ENCODE measurements at regions of chr1 and their contacts with region 1.

Region 1: GRCh38 chr1:225652729-225653462 is at the start of gene ENAH:
- DNase-seq: peak; percentile 87
- ATAC-seq: peak; percentile 89
- total RNA-seq, gene ENAH: 80.0 TPM

Region 2: DNA sequence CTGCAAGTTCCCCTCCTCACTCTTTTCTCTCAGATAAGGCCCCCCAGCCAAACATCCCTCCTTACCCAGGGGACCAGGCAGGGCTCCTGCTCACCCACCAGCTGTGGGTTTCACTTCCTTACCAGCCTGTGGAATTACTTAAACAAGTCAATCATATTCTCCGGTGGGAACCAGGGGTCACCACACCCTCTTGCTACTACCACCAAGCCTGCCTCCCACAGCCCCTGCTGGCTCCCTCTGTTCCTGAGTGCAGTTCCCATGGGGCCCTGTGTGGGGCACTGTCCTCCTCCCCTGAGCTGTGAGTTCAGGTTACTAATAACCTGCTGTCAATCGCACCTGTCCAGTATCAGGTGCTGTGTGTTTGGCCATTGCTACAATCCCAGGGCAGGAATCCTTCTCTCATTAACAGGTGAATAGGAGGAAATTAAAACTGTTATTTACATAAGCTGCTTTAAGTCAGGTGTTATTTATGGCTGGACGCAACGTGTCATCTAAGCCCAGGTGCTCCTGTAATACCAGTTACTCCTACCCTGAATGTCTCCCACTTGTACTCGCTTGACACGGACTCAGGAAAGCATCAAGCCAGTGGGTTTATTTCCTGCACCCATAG is 172.0 kb before region 1 on chr1:
- intact Hi-C with region 1: loop called (anchors 5 kb)
- DNase-seq: no peak
- ATAC-seq: no peak

Region 3: GRCh38 chr1:225578251-225578950 is 74.5 kb before region 1 on chr1:
- intact Hi-C with region 1: loop called (anchors 5 kb)
- DNase-seq: no peak
- ATAC-seq: no peak

Region 4: DNA sequence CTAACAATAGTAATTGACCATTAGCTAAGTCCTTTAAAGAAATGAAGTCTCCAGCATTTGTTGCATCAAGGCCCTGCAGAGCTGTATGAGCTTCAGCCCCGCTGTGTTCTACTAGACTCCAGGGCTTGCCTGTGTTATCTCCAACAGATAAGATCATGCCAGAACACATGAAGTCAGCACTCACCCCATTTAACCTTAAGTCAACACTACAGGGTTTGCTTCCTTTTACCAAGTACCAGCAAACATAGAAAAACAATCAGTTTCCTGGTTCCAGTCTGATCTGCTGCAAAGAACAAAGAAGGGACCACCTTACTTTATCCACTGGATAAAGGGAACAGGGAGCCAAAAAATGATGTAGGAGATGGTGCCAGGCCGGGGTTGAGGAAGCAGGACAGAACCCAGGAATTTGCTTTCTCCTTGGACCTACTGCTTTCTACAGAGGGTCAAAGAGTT is 41.3 kb after region 1 on chr1:
- intact Hi-C with region 1: loop called (anchors 5 kb)
- DNase-seq: peak; percentile 74
- ATAC-seq: peak; percentile 96

Region 5: GRCh38 chr1:225772323-225772768 is 119.5 kb after region 1 on chr1:
- intact Hi-C with region 1: loop called (anchors 5 kb)
- DNase-seq: peak; percentile 77
- ATAC-seq: peak; percentile 88